ENCODE measurements at regions of chr2 and their contacts with region 1.

Region 1: DNA sequence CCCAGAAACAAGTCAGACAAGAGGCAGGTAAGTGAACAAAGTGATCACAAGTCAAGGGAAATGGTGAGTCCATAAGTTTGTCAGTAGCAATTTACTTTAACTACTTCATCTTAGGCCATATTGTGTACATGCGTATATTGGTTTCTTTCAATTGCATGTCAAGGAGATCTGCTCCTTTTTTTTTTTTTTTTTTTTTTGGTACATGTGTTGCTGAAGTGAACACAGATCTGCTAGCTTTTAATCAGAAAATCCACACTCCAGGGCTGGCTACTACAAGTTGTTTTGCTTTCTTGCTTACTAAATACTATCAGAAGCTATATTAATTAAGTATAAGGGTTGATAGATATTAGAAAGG is 985.1 kb downstream of the TSN start:
- DNase-seq: no peak
- ATAC-seq: no peak
- H3K4me3 ChIP-seq: no peak overlapping the region
- H3K4me3 Mint-ChIP-seq: no peak overlapping the region
- H3K27ac ChIP-seq: no peak overlapping the region
- H3K27ac Mint-ChIP-seq: no peak overlapping the region
- H3K4me1 ChIP-seq: no peaks in the 10 kb centered on the region
- H3K4me1 Mint-ChIP-seq: no peaks in the 10 kb centered on the region
- H3K27me3 ChIP-seq: no peaks in the 10 kb centered on the region
- H3K27me3 Mint-ChIP-seq: no peaks in the 10 kb centered on the region

Region 2: DNA sequence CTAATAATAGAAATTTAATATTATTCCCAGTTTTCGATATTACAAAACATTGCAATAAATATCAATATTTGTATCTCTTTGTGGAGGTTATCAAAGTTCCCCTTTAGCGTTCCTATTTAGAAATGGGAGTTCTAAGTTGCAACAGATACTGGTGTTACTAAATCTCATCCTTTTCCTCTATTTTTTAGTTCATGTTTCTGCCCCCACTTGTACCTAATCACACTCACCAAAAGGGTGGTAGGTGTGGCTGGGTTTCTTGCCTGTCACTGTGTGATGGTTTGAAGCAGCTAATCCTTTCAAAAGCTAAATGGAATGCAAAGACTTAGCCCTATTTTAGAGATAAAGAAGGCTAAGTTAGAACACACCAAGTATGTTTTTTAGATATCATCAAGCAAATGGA is 12.8 kb after region 1 on chr2:
- CTCF ChIA-PET with region 1: no interaction called
- POLR2A ChIA-PET with region 1: no interaction called
- DNase-seq: no peak
- ATAC-seq: no peak
- H3K4me3 ChIP-seq: no peak overlapping the region
- H3K4me3 Mint-ChIP-seq: no peak overlapping the region
- H3K27ac ChIP-seq: no peak overlapping the region
- H3K27ac Mint-ChIP-seq: no peak overlapping the region
- H3K4me1 ChIP-seq: no peaks in the 10 kb centered on the region
- H3K4me1 Mint-ChIP-seq: no peaks in the 10 kb centered on the region
- H3K27me3 ChIP-seq: no peaks in the 10 kb centered on the region
- H3K27me3 Mint-ChIP-seq: no peaks in the 10 kb centered on the region

Region 3: DNA sequence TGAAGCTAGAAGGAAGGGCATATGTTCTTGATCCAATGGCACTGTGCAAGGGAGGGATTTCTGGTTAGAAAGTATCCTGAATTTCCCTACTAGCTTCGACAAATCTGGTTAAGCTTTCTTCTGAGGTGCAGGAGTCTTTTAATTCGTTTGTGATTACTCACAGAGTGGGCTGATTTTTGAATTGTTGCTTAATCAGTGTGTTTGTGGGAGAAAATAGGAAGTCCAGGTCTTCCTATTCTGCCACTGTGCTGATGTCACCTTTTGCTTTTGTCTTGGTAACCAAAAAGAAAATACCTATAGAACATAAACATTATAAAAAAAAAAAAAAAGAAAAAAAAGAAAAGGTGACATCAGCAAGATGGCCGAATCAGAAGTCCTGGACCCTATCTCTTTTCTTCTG is 23.4 kb after region 1 on chr2:
- CTCF ChIA-PET with region 1: interaction called in 1 of 2 experiments, 13 read pairs
- POLR2A ChIA-PET with region 1: no interaction called
- DNase-seq: no peak
- ATAC-seq: no peak
- H3K4me3 ChIP-seq: no peak overlapping the region
- H3K4me3 Mint-ChIP-seq: no peak overlapping the region
- H3K27ac ChIP-seq: no peak overlapping the region
- H3K27ac Mint-ChIP-seq: no peak overlapping the region
- H3K4me1 ChIP-seq: no peaks in the 10 kb centered on the region
- H3K4me1 Mint-ChIP-seq: no peaks in the 10 kb centered on the region
- H3K27me3 ChIP-seq: no peaks in the 10 kb centered on the region
- H3K27me3 Mint-ChIP-seq: no peaks in the 10 kb centered on the region

Region 4: GRCh38 chr2:122863532-122863931 is 123.0 kb after region 1 on chr2:
- CTCF ChIA-PET with region 1: no interaction called
- POLR2A ChIA-PET with region 1: no interaction called
- DNase-seq: no peak
- ATAC-seq: no peak
- H3K4me3 ChIP-seq: no peak overlapping the region
- H3K4me3 Mint-ChIP-seq: no peak overlapping the region
- H3K27ac ChIP-seq: no peak overlapping the region
- H3K27ac Mint-ChIP-seq: no peak overlapping the region
- H3K4me1 ChIP-seq: no peaks in the 10 kb centered on the region
- H3K4me1 Mint-ChIP-seq: no peaks in the 10 kb centered on the region
- H3K27me3 ChIP-seq: no peaks in the 10 kb centered on the region
- H3K27me3 Mint-ChIP-seq: no peaks in the 10 kb centered on the region

Region 5: DNA sequence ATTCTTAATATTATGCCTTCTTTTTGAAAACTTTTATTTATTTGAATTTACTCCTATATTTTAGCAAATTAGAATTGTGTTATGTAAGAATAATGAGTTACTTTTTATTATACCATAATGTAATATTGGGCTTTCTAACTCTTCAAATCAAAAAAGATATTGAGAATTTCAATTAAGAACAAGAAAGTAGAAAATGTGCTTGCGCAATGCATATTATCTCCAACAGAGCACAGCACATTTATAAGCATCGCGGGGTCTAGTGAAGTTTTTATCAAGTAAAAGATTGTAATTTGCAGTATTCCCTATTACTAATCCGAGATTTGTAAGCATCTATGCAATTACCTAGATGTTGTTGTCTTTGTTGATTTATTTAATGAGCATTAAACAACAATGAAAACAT is 455.4 kb after region 1 on chr2:
- CTCF ChIA-PET with region 1: no interaction called
- POLR2A ChIA-PET with region 1: no interaction called
- DNase-seq: no peak
- ATAC-seq: no peak
- H3K4me3 ChIP-seq: no peak overlapping the region
- H3K4me3 Mint-ChIP-seq: no peak overlapping the region
- H3K27ac ChIP-seq: no peak overlapping the region
- H3K27ac Mint-ChIP-seq: no peak overlapping the region
- H3K4me1 ChIP-seq: no peaks in the 10 kb centered on the region
- H3K4me1 Mint-ChIP-seq: no peaks in the 10 kb centered on the region
- H3K27me3 ChIP-seq: no peaks in the 10 kb centered on the region
- H3K27me3 Mint-ChIP-seq: no peaks in the 10 kb centered on the region

Measured in T-cell (primary cell).